ENCODE measurements at regions of chr7 and their contacts with region 1.

Region 1: GRCh38 chr7:36670585-36671431 is 53.5 kb downstream of the AOAH start:
- DNase-seq: peak; percentile 85
- H3K4me3 Mint-ChIP-seq: no peak overlapping the region
- H3K27ac Mint-ChIP-seq: no peak overlapping the region
- H3K4me1 Mint-ChIP-seq: peaks cover 28% of the 10 kb centered on the region
- H3K27me3 Mint-ChIP-seq: no peaks in the 10 kb centered on the region
- CTCF ChIP-seq: peak; percentile 85

Region 2: DNA sequence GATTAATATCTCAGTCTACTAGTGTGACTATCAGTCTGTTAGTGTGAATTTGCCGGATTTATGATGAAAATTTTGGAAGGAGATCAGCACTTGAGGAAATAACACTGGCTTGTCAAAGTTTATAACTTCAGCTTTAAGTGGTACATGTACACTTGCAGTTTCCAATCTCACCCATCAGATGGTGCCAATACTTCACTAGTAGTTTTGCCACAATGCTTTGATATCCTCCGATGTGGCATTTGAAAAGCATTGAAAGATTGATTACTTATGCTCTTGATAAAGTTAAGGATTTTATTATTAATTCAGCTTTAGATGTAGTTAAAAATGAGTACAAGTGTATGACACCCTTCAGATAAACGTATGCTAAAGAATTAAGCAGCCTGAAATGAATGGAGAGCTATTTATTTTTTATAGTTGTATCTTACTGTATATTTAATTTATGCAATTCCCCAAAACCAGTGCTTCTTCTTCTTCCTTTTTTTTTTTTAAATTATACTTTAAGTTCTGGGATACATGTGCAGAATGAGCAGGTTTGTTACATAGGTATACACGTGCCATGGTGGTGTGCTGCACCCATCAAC is 183.0 kb before region 1 on chr7:
- CTCF ChIA-PET with region 1: interaction called, 42 read pairs
- POLR2A ChIA-PET with region 1: interaction called, 5 read pairs
- intact Hi-C with region 1: loop called (anchors 1 kb)
- DNase-seq: peak; percentile 74
- H3K4me3 Mint-ChIP-seq: no peak overlapping the region
- H3K27ac Mint-ChIP-seq: no peak overlapping the region
- H3K4me1 Mint-ChIP-seq: peaks cover 16% of the 10 kb centered on the region
- H3K27me3 Mint-ChIP-seq: no peaks in the 10 kb centered on the region
- CTCF ChIP-seq: peak; percentile 93

Region 3: DNA sequence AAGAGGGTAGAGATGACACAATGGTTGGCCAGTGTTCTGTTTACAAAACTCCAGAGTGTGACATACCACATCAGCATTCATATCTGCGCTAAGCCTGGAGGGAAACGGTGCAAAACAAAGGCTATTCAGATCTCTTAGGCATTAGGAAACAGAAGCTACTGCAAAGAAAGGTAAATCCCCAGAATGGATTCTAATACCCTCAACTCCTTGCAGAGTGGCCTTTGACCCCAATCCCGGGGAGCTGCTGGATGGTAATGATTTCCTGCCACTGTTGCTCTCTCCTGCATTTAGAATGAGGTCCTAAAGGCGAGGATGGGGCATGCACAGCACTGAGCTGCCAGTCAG is 11.7 kb before region 1 on chr7:
- CTCF ChIA-PET with region 1: interaction called, 30 read pairs
- POLR2A ChIA-PET with region 1: interaction called, 5 read pairs
- intact Hi-C with region 1: no loop called
- DNase-seq: peak; percentile 88
- H3K4me3 Mint-ChIP-seq: peak overlapping the region; percentile 36
- H3K27ac Mint-ChIP-seq: peak overlapping the region; percentile 86
- H3K4me1 Mint-ChIP-seq: peaks cover 23% of the 10 kb centered on the region
- H3K27me3 Mint-ChIP-seq: no peaks in the 10 kb centered on the region
- CTCF ChIP-seq: no peak

Region 4: GRCh38 chr7:36742911-36743775 is 72.3 kb after region 1 on chr7:
- CTCF ChIA-PET with region 1: no interaction called
- POLR2A ChIA-PET with region 1: no interaction called
- intact Hi-C with region 1: no loop called
- DNase-seq: no peak
- H3K4me3 Mint-ChIP-seq: no peak overlapping the region
- H3K27ac Mint-ChIP-seq: no peak overlapping the region
- H3K4me1 Mint-ChIP-seq: peaks cover 12% of the 10 kb centered on the region
- H3K27me3 Mint-ChIP-seq: no peaks in the 10 kb centered on the region
- CTCF ChIP-seq: no peak

Region 5: DNA sequence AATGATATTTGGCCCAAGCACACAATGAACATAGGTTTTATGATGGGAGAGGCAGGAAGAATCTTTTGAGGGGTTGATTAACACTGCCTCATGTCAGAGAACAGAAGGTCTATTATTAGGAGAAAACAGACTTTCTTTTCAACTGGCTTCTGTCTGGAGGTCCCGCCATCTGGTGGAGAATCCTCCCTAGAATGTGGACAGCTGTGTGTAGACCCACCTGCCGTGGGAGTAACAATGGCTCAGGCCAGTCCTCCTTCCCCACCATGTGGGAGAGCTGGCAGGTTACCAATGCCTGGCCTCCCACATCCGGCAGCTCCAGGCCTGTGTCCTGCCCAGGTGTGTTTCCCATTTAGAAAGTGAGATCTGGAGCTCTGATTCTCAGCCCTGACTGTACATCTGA is 123.9 kb after region 1 on chr7:
- CTCF ChIA-PET with region 1: interaction called, 11 read pairs
- POLR2A ChIA-PET with region 1: no interaction called
- intact Hi-C with region 1: no loop called
- DNase-seq: peak; percentile 62
- H3K4me3 Mint-ChIP-seq: no peak overlapping the region
- H3K27ac Mint-ChIP-seq: peak overlapping the region; percentile 85
- H3K4me1 Mint-ChIP-seq: peaks cover 25% of the 10 kb centered on the region
- H3K27me3 Mint-ChIP-seq: no peaks in the 10 kb centered on the region
- CTCF ChIP-seq: no peak

Region 6: GRCh38 chr7:37201003-37201875 is 530.4 kb after region 1 on chr7:
- CTCF ChIA-PET with region 1: interaction called, 7 read pairs
- POLR2A ChIA-PET with region 1: no interaction called
- intact Hi-C with region 1: loop called (anchors 5 kb)
- DNase-seq: peak; percentile 79
- H3K4me3 Mint-ChIP-seq: no peak overlapping the region
- H3K27ac Mint-ChIP-seq: no peak overlapping the region
- H3K4me1 Mint-ChIP-seq: peaks cover 6% of the 10 kb centered on the region
- H3K27me3 Mint-ChIP-seq: no peaks in the 10 kb centered on the region
- CTCF ChIP-seq: peak; percentile 86

Measured in MCF 10A (cell line).